Mammary epithelial cell (primary cell): ENCODE measurements at regions of chr17 and their contacts with region 1.

Region 1: GRCh38 chr17:50252781-50253180 is 21.5 kb upstream of the TMEM92 start:
- DNase-seq: no peak
- H3K4me3 ChIP-seq: no peak overlapping the region
- H3K27ac ChIP-seq: no peak overlapping the region
- H3K4me1 ChIP-seq: no peaks in the 10 kb centered on the region
- H3K27me3 ChIP-seq: no peaks in the 10 kb centered on the region
- CTCF ChIP-seq: no peak

Region 2: DNA sequence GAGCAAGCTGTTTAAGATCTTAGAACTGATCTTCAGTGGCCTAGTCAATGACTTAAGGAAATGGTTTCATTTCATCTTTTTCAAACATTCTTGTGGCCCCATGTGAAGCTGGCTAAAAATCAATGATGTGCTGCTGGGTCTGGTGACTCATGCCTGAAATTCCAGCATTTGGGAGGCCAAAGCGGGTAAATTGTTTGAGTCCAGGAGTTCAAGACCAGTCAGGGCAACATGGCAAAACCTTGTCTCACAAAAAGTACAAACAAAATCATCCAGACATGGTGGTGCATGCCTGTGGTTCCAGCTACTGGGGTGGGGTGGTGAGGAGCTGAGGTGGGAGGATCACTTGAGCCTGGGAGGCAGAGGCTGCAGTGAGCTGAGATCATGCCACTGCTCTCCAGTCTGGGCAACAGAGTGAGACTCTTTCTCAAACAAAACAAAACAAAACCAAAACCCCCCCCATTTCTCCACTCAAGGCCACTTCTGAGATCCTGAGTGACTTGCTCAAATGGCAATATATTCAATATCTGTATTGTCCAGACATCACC is 33.9 kb before region 1 on chr17:
- CTCF ChIA-PET with region 1: no interaction called
- dilution Hi-C with region 1: loop called (anchors 5 kb)
- in situ Hi-C with region 1: no loop called
- intact Hi-C with region 1: no loop called
- DNase-seq: peak; percentile 84
- H3K4me3 ChIP-seq: no peak overlapping the region
- H3K27ac ChIP-seq: peak overlapping the region; percentile 93
- H3K4me1 ChIP-seq: peaks cover 53% of the 10 kb centered on the region
- H3K27me3 ChIP-seq: no peaks in the 10 kb centered on the region
- CTCF ChIP-seq: no peak

Region 3: GRCh38 chr17:50264263-50265113 is 11.7 kb after region 1 on chr17:
- CTCF ChIA-PET with region 1: no interaction called
- dilution Hi-C with region 1: no loop called
- in situ Hi-C with region 1: no loop called
- intact Hi-C with region 1: loop called (anchors 1 kb)
- DNase-seq: no peak
- H3K4me3 ChIP-seq: no peak overlapping the region
- H3K27ac ChIP-seq: no peak overlapping the region
- H3K4me1 ChIP-seq: peaks cover 13% of the 10 kb centered on the region
- H3K27me3 ChIP-seq: no peaks in the 10 kb centered on the region
- CTCF ChIP-seq: no peak